ENCODE measurements at regions of chr1 and their contacts with region 1.

Region 1: DNA sequence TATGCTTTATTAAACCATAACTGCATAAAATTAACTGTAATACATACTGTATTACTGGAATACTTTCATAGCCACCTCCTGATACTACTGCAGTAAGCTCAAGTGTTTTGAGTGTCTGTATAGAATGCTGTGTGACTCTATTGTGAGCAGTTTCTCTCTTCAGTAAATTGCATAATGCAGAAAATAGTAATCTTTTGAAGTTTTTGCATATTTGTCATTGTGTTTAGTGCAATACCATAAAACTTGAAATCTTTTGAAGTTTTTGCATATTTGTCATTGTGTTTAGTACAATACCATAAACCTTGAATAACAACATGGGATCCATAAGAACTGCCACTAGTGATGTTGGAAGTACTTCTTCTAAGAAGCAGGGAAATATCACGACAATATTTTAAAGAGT is 11.2 kb downstream of the TPR start:
- DNase-seq: no peak
- ATAC-seq: no peak
- H3K4me3 ChIP-seq: no peak overlapping the region
- H3K27ac ChIP-seq: no peak overlapping the region
- H3K4me1 ChIP-seq: peaks cover 0 to 5% (median 0%) of the 10 kb centered on the region in 12 donors
- H3K27me3 ChIP-seq: no peaks in the 10 kb centered on the region
- CTCF ChIP-seq: no peak
- POLR2A ChIP-seq: no peak

Region 2: DNA sequence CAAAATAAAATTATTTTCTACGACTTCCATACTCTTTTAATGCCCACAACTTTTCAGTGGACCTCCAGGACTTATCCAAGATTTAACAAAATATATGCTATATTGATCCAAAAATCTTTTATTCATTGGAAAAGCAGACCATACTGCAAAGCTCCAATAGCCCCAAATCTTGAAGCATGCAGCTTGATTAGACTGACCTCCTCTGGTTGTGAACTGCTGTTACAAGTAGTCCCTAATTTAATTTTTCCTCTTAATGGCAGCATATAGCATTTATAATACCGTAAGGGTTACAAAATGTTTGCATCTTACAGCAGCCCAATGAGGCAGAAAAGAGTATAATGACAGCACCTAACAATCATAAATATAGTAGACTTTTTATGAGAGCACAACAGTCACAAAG is 38.7 kb before region 1 on chr1:
- intact Hi-C with region 1: loop called in 2 of 10 experiments (anchors 5 kb)
- DNase-seq: no peak
- ATAC-seq: no peak
- H3K4me3 ChIP-seq: no peak overlapping the region
- H3K27ac ChIP-seq: no peak overlapping the region
- H3K4me1 ChIP-seq: no peaks in the 10 kb centered on the region
- H3K27me3 ChIP-seq: no peaks in the 10 kb centered on the region
- CTCF ChIP-seq: peak in 6 of 12 donors; percentile 16 to 31 (median 16)
- POLR2A ChIP-seq: no peak

Region 3: DNA sequence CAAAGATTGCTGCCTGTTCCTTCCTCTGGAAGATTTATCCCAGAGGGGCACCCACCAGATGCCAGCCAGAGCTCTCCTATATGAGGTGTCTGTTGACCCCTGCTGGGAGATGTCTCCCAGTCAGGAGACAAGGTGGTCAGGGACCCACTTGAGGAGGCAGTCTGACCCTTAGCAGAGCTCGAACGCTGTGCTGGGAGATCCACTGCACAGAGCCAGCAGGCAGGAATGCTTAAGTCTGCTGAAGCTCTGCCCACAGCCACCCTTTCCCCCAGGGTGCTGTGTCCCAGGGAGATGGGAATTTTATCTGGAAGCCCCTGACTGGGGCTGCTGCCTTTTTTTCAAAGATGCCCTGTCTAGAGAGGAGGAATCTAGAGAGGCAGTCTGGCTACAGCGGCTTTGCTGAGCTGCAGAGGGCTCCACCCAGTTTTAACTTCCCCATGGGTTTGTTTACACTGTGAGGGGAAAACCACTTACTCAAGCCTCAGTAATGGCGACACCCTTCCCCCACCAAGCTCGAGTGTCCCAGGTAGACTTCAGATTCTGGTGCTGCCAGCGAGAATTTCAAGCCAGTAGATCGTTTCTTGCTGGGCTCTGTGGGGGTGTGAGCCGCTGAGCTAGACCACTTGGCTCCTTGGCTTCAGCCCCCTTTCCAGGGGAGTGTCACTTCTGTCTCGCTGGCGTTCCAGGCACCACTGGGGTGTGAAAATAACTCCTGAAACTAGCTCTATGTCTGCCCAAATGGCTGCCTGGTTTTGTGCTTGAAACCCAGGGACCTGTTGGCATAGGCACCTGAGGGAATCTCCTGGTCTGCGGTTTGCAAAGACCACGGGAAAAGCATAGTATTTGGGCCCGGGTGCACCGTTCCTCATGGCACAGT is 148.1 kb after region 1 on chr1:
- intact Hi-C with region 1: no loop called
- DNase-seq: peak in 1 of 5 donors; percentile 18
- ATAC-seq: peak in 1 of 4 donors; percentile 48
- H3K4me3 ChIP-seq: no peak overlapping the region
- H3K27ac ChIP-seq: no peak overlapping the region
- H3K4me1 ChIP-seq: no peaks in the 10 kb centered on the region
- H3K27me3 ChIP-seq: no peaks in the 10 kb centered on the region
- CTCF ChIP-seq: no peak
- POLR2A ChIP-seq: no peak